ENCODE measurements at regions of chr1 and their contacts with region 1.

Region 1: DNA sequence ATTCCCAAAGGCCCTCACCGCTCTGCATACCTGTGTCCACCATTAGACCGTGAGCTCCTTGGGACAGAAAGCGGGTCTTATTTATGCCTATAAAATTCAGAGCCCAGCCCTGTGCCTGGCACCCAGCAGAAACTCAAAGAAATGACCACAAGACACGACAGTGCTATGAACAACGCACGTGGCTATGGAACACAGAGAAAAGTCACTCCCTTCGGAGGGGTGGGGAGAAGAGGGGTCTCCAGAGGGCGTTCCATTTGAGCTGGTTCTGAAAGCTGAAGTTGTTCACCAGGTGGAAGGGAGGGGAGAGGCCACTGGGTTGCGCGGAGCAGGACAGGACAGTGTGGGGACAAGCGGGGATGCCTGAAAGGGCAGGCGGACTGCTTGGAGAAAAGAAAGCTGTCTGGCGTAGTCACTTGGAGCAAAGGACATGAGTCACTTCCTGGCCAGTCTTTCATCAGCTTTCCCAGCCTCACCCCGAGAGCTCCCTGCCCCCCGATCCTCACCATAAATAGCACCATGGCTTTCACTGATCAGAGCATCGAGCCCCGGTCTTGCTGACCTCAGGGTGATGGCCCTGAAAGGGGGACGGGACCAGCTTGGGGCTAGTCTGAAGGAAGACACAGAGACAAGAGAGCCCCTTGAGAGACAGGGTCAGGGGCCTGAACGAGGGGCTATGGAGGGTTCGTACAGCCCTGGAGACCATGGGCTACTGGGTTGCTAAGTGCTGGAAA is 28.5 kb downstream of the ECE1 start:
- DNase-seq: peak; percentile 92
- H3K4me3 ChIP-seq: peak overlapping the region in 1 of 4 donors; percentile 9
- H3K27ac ChIP-seq: peak overlapping the region; percentile 85 to 91 (median 86)
- H3K4me1 ChIP-seq: peaks cover 0 to 41% (median 36%) of the 10 kb centered on the region in 4 donors
- H3K27me3 ChIP-seq: no peaks in the 10 kb centered on the region
- CTCF ChIP-seq: no peak
- EP300 ChIP-seq: peak in 1 of 4 donors; percentile 79
- POLR2A ChIP-seq: no peak

Region 2: DNA sequence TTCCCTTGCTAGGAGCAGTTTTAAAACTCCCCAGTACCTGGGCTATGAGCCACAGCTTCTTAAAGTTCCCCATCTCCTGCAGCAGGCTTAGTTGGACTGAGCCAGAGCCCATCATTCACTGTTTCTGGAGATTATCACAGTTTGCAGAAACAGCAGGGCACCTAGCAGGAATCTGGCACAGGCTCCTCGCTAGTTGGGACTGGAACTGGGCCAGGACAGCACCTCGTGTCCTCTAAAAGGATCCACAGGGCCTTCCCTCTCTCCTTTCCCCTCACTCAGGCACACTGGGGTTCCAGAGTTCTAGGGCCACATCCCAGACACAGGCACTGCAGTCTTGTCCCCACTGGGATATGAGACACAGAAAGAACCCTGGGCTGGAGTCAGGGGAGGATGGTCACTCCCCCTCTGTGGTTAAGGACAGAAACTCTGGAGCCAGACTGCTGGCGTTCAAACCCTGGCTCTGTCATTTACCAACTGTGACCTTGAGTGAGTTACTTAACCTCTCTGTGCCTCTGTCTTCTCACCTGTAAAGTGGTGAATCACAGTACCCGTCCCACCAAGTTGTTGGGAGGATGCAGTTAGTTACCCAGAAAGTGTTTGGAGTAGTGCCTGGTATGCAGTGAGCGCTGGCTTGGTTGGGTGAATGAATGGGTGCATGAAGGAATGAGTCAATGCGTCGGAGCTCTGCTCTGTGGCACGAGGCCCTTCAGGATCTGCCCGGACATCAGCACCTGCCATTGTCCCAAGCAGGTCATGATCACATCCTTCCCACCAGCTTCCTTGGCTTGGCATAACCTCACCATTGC is 47.3 kb after region 1 on chr1:
- intact Hi-C with region 1: loop called (anchors 5 kb)
- DNase-seq: peak; percentile 97
- H3K4me3 ChIP-seq: peak overlapping the region in 1 of 4 donors; percentile 5
- H3K27ac ChIP-seq: peak overlapping the region; percentile 71 to 96 (median 91)
- H3K4me1 ChIP-seq: peaks cover 0 to 100% (median 97%) of the 10 kb centered on the region in 4 donors
- H3K27me3 ChIP-seq: no peaks in the 10 kb centered on the region
- CTCF ChIP-seq: no peak
- EP300 ChIP-seq: peak; percentile 65 to 90 (median 87)
- POLR2A ChIP-seq: no peak

Measured in sigmoid colon (tissue), 7 donors.